CD4-positive, alpha-beta memory T cell (primary cell): ENCODE measurements at regions of chr19 and their contacts with region 1.

Region 1: DNA sequence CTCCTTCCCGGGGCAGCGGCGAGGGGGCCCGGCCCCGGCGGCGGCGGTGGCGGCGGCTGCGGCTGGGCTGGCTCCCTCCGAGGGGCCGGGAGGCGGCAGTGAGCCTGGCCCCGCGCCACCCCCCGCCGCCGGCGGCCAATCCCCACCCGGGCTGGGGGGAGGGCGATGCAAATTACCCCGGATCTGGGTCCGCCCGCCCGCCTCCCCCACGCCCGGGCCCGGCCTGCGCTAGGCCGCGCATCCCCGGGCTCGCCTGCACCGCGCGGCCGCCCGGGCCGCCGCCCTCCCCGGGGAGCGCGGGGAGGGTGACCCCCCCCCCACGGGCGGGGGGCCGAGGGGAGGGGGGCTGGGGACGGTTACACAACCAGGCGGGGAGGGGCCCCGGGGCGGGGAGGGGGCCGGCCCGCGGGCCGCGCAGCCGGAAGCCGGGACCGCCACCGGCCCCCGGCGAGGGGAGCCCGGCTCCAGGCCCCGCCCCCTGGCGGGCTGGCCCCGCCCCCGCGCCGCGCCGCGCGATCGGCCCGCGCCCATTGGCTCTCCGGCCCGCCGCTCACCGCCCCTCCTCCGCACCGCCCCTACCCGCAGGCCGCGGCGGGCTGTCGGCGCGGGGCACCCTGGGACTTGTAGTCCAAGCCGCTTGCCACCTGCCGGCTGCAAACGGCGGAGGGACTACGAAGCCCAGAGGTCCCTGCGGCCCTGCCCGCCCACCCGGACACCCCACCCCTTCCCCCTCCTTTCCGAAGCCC is 1.1 kb downstream of the ZBTB7A start:
- DNase-seq: peak; percentile 96 to 99 (median 98)
- H3K4me3 ChIP-seq: peak overlapping the region in 1 of 2 donors; percentile 70
- H3K4me3 Mint-ChIP-seq: peak overlapping the region; percentile 66 to 80 (median 76)
- H3K27ac ChIP-seq: no peak overlapping the region
- H3K27ac Mint-ChIP-seq: peak overlapping the region in 5 of 7 donors; percentile 35 to 80 (median 62)
- H3K4me1 ChIP-seq: peaks cover 64% of the 10 kb centered on the region
- H3K4me1 Mint-ChIP-seq: peaks cover 19 to 55% (median 37%) of the 10 kb centered on the region in 4 donors
- H3K27me3 ChIP-seq: no peaks in the 10 kb centered on the region
- H3K27me3 Mint-ChIP-seq: no peaks in the 10 kb centered on the region

Region 2: DNA sequence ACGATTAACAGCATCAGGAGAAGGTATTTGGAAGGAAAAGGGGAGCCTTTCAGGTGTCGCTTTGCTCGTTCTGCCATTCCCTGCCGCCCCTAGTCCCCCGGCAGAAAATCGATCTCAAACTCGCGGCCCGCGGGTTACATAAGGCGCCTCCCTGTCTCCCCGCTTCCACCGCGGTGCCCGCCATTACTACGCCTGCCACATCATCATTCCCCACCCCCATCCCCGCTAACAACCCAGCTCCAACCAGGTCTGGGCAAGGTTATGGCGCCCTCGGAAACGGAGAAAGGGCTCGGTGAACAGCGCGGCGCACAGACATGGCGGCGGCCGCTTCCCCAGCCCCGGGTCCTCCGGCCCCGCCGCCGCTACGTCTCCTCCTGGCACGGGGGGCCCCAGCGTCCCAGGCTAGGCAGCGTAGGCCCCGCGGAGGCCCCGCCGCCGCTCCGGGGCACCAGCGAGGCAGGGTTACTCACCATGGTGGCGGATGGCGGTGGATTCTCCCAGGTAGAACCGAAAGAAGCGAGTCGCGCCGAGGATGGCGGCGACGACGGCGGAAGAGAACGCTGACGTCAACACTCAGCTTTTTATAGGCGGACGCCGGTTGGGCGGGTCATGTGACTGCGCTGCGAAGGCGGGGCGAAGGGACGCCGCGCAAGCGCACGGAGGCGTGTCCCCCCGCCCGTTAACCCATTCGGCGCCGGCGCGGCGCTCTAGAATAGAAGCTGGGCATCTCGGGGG is 80.5 kb before region 1 on chr19 and contains the start of gene EEF2:
- CTCF ChIA-PET with region 1: no interaction called
- POLR2A ChIA-PET with region 1: interaction called, 22 read pairs
- intact Hi-C with region 1: loop called (anchors 1 kb)
- DNase-seq: peak; percentile 91 to 95 (median 94)
- H3K4me3 ChIP-seq: peak within 1 kb of the TSS; percentile 67 to 93
- H3K4me3 Mint-ChIP-seq: peak within 1 kb of the TSS; percentile 96 to 98 (median 97)
- H3K27ac ChIP-seq: peak within 1 kb of the TSS; percentile 91
- H3K27ac Mint-ChIP-seq: peak within 1 kb of the TSS; percentile 94 to 99 (median 97)
- H3K4me1 ChIP-seq: peaks cover 55% of the 10 kb centered on the region
- H3K4me1 Mint-ChIP-seq: peaks cover 20 to 61% (median 41%) of the 10 kb centered on the region in 4 donors
- H3K27me3 ChIP-seq: no peaks in the 10 kb centered on the region
- H3K27me3 Mint-ChIP-seq: no peaks in the 10 kb centered on the region
- total RNA-seq, gene EEF2: 2,286 to 2,389 TPM

Region 3: GRCh38 chr19:4042731-4043082 is 22.9 kb before region 1 on chr19:
- CTCF ChIA-PET with region 1: no interaction called
- POLR2A ChIA-PET with region 1: no interaction called
- intact Hi-C with region 1: no loop called
- DNase-seq: peak in 1 of 5 donors; percentile 34
- H3K4me3 ChIP-seq: no peak overlapping the region
- H3K4me3 Mint-ChIP-seq: no peak overlapping the region
- H3K27ac ChIP-seq: no peak overlapping the region
- H3K27ac Mint-ChIP-seq: no peak overlapping the region
- H3K4me1 ChIP-seq: no peaks in the 10 kb centered on the region
- H3K4me1 Mint-ChIP-seq: peaks cover 0 to 9% (median 0%) of the 10 kb centered on the region in 4 donors
- H3K27me3 ChIP-seq: no peaks in the 10 kb centered on the region
- H3K27me3 Mint-ChIP-seq: no peaks in the 10 kb centered on the region

Region 4: DNA sequence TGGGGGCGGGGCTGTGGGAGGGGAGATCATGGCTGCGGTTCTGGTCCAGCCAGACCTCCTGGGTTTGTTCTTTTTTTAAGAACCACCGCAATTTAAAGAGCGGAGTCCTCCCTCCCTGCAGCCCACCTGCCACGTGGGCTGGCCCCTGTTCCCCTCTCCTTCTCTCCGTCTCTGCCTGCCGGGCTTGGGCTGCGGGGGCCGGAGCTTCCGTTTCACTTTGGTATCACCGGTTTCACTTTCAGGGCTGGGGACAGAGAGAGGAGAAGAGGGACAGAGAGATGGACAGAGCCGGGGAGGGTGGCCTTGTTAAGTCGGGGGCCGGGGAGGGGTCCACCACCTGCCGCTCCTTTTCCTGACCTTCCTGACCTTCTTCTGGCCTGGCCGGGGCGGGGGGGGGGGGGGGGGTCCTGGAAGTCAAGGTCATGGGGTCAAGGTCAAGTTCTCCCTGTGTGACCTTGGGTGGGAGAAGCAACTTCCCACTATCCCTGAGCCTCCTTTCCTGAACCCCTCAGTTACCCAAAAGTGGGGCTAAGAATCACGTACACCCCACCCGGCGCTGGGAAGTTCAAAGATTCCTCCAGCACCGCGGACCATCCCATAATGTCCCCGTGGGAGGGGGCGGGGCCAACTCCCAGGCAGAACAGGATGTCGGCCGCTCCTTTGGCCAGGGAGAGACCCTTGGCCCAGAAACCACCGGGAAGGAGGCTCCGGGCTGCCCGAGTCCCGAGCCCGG is 12.4 kb after region 1 on chr19:
- CTCF ChIA-PET with region 1: no interaction called
- POLR2A ChIA-PET with region 1: interaction called, 21 read pairs
- intact Hi-C with region 1: no loop called
- DNase-seq: peak in 4 of 5 donors; percentile 34 to 59 (median 40)
- H3K4me3 ChIP-seq: peak overlapping the region; percentile 64 to 65
- H3K4me3 Mint-ChIP-seq: peak overlapping the region; percentile 85 to 93 (median 88)
- H3K27ac ChIP-seq: peak overlapping the region; percentile 65
- H3K27ac Mint-ChIP-seq: peak overlapping the region; percentile 71 to 94 (median 92)
- H3K4me1 ChIP-seq: peaks cover 29% of the 10 kb centered on the region
- H3K4me1 Mint-ChIP-seq: peaks cover 4 to 24% (median 17%) of the 10 kb centered on the region in 4 donors
- H3K27me3 ChIP-seq: no peaks in the 10 kb centered on the region
- H3K27me3 Mint-ChIP-seq: no peaks in the 10 kb centered on the region

Region 5: DNA sequence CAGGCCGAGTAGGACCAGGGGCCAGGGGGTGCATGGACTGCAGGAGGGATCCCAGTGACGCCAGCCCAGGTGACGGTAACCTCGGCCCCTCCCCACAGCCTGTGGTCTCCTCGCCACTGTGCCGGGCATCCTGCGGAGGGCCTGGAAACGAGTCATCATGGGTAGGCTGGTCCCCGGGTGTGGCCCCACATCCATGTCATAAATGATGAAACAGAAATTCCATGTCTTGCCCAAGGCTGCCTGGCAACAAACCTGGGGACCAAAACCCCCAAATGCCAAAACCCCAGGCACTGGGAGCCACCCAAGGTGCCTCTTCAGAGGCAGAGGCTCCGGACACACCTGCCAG is 37.4 kb after region 1 on chr19:
- CTCF ChIA-PET with region 1: interaction called, 5 read pairs
- POLR2A ChIA-PET with region 1: interaction called, 54 read pairs
- intact Hi-C with region 1: loop called (anchors 2 kb)
- DNase-seq: no peak
- H3K4me3 ChIP-seq: no peak overlapping the region
- H3K4me3 Mint-ChIP-seq: no peak overlapping the region
- H3K27ac ChIP-seq: no peak overlapping the region
- H3K27ac Mint-ChIP-seq: peak overlapping the region in 1 of 7 donors; percentile 91
- H3K4me1 ChIP-seq: peaks cover 42% of the 10 kb centered on the region
- H3K4me1 Mint-ChIP-seq: peaks cover 15 to 43% (median 22%) of the 10 kb centered on the region in 4 donors
- H3K27me3 ChIP-seq: no peaks in the 10 kb centered on the region
- H3K27me3 Mint-ChIP-seq: no peaks in the 10 kb centered on the region

Region 6: DNA sequence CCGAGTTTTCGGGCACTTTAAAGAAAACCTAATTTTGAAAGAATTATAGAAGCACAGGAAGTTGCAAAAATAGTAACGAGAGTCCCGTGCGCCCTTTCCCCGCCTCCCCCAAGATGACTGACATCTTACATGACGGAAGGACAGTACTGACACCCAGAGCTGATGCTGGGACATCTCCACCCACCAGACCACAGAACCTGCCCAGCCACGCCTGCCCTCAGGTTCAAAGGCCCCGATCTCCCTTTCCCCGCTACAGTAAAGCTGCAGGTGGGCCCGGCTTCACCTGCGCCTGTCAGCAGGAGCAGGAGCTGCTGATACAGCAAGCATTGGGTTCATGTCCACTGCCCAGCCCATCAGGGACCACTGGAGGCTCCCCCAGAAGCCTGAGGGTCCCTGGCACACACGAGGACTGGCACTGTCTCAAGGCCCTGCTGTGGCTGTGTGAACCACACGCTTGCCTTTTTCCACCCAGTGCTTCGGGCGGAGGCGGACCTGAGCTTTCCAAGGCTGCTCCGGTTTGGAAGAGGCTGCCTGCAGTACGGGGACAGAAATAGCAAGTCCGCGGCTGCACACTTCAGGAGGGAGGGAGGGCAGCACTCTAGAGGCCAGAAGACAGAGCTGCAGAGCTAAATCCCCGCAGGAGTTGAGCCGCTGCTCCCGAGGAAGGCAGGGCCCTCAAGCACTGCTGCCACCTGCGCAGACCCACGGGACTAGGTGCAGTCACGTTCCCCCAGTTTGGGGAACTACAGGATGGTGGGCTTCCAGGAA is 49.6 kb after region 1 on chr19:
- CTCF ChIA-PET with region 1: no interaction called
- POLR2A ChIA-PET with region 1: interaction called, 12 read pairs
- intact Hi-C with region 1: no loop called
- DNase-seq: peak; percentile 71 to 80 (median 77)
- H3K4me3 ChIP-seq: peak overlapping the region in 1 of 2 donors; percentile 36
- H3K4me3 Mint-ChIP-seq: peak overlapping the region; percentile 5 to 72 (median 64)
- H3K27ac ChIP-seq: peak overlapping the region; percentile 49
- H3K27ac Mint-ChIP-seq: peak overlapping the region; percentile 65 to 92 (median 91)
- H3K4me1 ChIP-seq: peaks cover 34% of the 10 kb centered on the region
- H3K4me1 Mint-ChIP-seq: peaks cover 11 to 42% (median 20%) of the 10 kb centered on the region in 4 donors
- H3K27me3 ChIP-seq: no peaks in the 10 kb centered on the region
- H3K27me3 Mint-ChIP-seq: no peaks in the 10 kb centered on the region

Region 7: GRCh38 chr19:4139614-4140236 is 74.1 kb after region 1 on chr19:
- CTCF ChIA-PET with region 1: interaction called, 3 read pairs
- POLR2A ChIA-PET with region 1: interaction called, 9 read pairs
- intact Hi-C with region 1: loop called (anchors 1 kb)
- DNase-seq: peak; percentile 74 to 80 (median 78)
- H3K4me3 ChIP-seq: no peak overlapping the region
- H3K4me3 Mint-ChIP-seq: peak overlapping the region; percentile 7 to 81 (median 60)
- H3K27ac ChIP-seq: no peak overlapping the region
- H3K27ac Mint-ChIP-seq: peak overlapping the region in 3 of 7 donors; percentile 16 to 59 (median 35)
- H3K4me1 ChIP-seq: peaks cover 9% of the 10 kb centered on the region
- H3K4me1 Mint-ChIP-seq: peaks cover 6 to 13% (median 10%) of the 10 kb centered on the region in 4 donors
- H3K27me3 ChIP-seq: no peaks in the 10 kb centered on the region
- H3K27me3 Mint-ChIP-seq: peaks cover 5 to 6% of the 10 kb centered on the region in 2 donors

Region 8: GRCh38 chr19:4152241-4152998 is 86.8 kb after region 1 on chr19:
- CTCF ChIA-PET with region 1: no interaction called
- POLR2A ChIA-PET with region 1: no interaction called
- intact Hi-C with region 1: no loop called
- DNase-seq: no peak
- H3K4me3 ChIP-seq: no peak overlapping the region
- H3K4me3 Mint-ChIP-seq: peak overlapping the region in 1 of 8 donors; percentile 8
- H3K27ac ChIP-seq: no peak overlapping the region
- H3K27ac Mint-ChIP-seq: peak overlapping the region in 1 of 7 donors; percentile 27
- H3K4me1 ChIP-seq: peaks cover 9% of the 10 kb centered on the region
- H3K4me1 Mint-ChIP-seq: peaks cover 2 to 14% (median 7%) of the 10 kb centered on the region in 4 donors
- H3K27me3 ChIP-seq: no peaks in the 10 kb centered on the region
- H3K27me3 Mint-ChIP-seq: peaks cover under 1 to 4% of the 10 kb centered on the region in 2 donors

Region 9: GRCh38 chr19:4246767-4247593 is 181.4 kb after region 1 on chr19 and contains the start of gene YJU2:
- CTCF ChIA-PET with region 1: no interaction called
- POLR2A ChIA-PET with region 1: interaction called, 4 read pairs
- intact Hi-C with region 1: loop called (anchors 1 kb)
- DNase-seq: peak; percentile 98 to 100 (median 99)
- H3K4me3 ChIP-seq: peak within 1 kb of the TSS; percentile 88 to 89
- H3K4me3 Mint-ChIP-seq: peak within 1 kb of the TSS; percentile 91 to 98 (median 96)
- H3K27ac ChIP-seq: peak within 1 kb of the TSS; percentile 99
- H3K27ac Mint-ChIP-seq: peak within 1 kb of the TSS; percentile 97 to 100 (median 99)
- H3K4me1 ChIP-seq: peaks cover 16% of the 10 kb centered on the region
- H3K4me1 Mint-ChIP-seq: peaks cover 6 to 31% (median 20%) of the 10 kb centered on the region in 4 donors
- H3K27me3 ChIP-seq: no peaks in the 10 kb centered on the region
- H3K27me3 Mint-ChIP-seq: peaks cover 0 to 2% of the 10 kb centered on the region in 2 donors
- total RNA-seq, gene YJU2: 28.1 to 29.4 TPM